Activated CD4-positive, alpha-beta T cell treated with anti-CD3 and anti-CD28 coated beads for 36 hours (primary cell): ENCODE measurements at regions of chr17 and their contacts with region 1.

Region 1: DNA sequence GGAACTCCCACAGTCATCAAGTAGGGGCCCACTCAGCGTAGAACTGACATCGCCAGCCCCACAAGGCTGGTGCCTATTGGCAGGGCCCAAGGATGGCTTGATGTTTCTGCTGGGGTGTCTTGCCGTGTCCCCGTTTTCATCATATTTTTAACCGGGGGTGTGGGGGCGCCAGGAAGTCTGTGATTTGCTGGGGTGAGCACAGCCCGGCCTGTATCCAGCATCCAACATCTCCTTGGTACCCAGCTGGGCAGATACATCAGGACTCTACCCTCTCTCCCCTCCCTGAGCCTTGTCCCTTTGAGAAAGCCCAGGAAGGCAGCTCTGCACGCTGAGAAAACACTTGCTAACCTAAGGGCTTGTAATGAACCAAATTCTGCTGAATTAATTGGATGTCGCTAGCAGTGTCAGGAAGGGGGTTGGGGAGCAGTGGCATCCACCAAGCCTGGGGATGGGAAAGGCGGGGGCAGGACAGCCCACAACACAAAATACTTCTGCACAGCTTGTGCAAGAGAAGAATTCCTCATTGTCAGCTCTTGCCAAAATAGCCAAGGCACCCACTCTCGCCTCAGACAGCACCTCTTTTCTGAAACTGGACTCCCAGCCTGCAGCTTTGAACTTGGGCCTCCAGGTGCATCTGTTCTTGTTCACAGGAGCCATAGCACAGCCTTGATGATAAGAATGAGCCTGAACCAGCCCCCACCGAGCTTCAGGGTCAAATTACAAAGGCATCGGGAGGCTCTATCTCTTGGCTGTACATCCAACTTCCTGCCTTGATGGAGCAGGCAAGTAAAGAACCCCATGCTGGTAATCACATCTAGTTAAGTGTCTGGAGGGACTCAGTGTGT is 63.7 kb upstream of the LYRM9 start:
- DNase-seq: no peak
- ATAC-seq: no peak
- H3K4me3 Mint-ChIP-seq: no peak overlapping the region
- H3K27ac Mint-ChIP-seq: no peak overlapping the region
- H3K4me1 Mint-ChIP-seq: no peaks in the 10 kb centered on the region
- H3K27me3 Mint-ChIP-seq: peaks cover 3% of the 10 kb centered on the region

Region 2: DNA sequence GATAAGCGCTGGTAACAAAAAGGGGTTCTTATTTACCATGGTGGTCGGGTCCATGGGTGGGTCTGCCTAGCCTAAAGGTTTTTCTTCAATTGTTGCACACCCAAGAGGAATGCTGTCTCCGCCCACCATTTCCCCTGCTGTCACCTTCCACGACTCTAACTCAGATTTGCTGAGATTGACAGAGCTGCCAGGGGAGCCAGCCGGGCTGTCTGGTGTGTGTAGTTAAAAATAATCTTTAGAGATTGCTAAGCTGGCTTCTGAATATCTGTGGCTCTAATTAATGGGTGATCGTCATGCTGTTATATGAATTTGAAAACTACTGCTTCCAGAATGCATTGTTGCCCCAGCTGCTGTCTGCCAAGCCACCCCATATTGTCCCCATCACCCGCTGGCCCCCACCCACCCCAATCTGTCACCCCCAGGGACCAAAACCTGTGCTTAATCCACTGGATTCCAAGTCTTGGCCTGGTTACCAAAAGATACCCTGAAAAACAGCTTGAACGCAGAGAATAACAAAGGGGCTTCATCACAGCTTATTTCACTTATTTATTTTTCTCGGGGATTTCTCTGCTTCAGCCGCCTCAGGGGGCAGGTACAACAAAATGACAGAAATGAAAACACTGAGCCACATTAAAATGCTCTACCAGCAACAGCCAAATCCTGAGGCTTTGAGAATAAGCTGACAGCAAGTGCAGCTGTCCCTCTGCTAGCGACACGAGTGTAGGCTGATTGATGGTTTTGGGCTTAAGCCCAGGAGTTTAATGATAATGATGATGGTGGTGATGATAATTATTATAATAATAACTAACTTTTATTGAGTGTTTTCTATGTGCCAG is 39.6 kb after region 1 on chr17:
- CTCF ChIA-PET with region 1: no interaction called
- POLR2A ChIA-PET with region 1: no interaction called
- intact Hi-C with region 1: loop called in 1 of 2 experiments (anchors 5 kb)
- DNase-seq: no peak
- ATAC-seq: no peak
- H3K4me3 Mint-ChIP-seq: no peak overlapping the region
- H3K27ac Mint-ChIP-seq: no peak overlapping the region
- H3K4me1 Mint-ChIP-seq: no peaks in the 10 kb centered on the region
- H3K27me3 Mint-ChIP-seq: peaks cover 9% of the 10 kb centered on the region

Region 3: DNA sequence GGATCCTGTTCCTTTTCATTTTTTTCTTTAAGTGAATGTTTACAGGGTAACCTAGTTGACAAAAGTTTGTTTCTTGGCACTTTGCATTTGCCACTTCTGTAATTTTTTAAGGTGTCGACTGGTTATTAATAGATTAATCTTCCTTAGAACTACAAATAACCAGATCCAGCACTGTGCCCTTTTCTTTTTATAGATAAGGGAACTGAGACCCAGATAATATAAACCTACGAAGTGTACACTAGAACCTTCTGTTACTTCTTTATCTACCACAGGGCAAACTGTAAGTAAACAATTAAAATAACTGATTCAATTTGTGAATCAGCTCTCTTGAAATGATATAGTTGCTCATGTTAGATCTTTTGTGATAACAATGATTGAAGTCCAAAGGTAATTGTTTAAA is 141.1 kb after region 1 on chr17:
- CTCF ChIA-PET with region 1: no interaction called
- POLR2A ChIA-PET with region 1: no interaction called
- intact Hi-C with region 1: no loop called
- DNase-seq: no peak
- ATAC-seq: no peak
- H3K4me3 Mint-ChIP-seq: no peak overlapping the region
- H3K27ac Mint-ChIP-seq: no peak overlapping the region
- H3K4me1 Mint-ChIP-seq: no peaks in the 10 kb centered on the region
- H3K27me3 Mint-ChIP-seq: no peaks in the 10 kb centered on the region